Mammary epithelial cell (primary cell): ENCODE measurements at regions of chr11 and their contacts with region 1.

Region 1: GRCh38 chr11:120952461-120953434 is 71.2 kb upstream of the TBCEL start:
- DNase-seq: peak; percentile 56
- H3K4me3 ChIP-seq: no peak overlapping the region
- H3K27ac ChIP-seq: no peak overlapping the region
- H3K4me1 ChIP-seq: peaks cover 8% of the 10 kb centered on the region
- H3K27me3 ChIP-seq: peaks cover 3% of the 10 kb centered on the region
- CTCF ChIP-seq: peak; percentile 64 to 89

Region 2: GRCh38 chr11:120235024-120235861 is 717.5 kb before region 1 on chr11:
- CTCF ChIA-PET with region 1: no interaction called
- dilution Hi-C with region 1: no loop called
- in situ Hi-C with region 1: no loop called
- intact Hi-C with region 1: loop called (anchors 10 kb)
- DNase-seq: peak; percentile 62
- H3K4me3 ChIP-seq: no peak overlapping the region
- H3K27ac ChIP-seq: no peak overlapping the region
- H3K4me1 ChIP-seq: peaks cover 19% of the 10 kb centered on the region
- H3K27me3 ChIP-seq: peaks cover 5% of the 10 kb centered on the region
- CTCF ChIP-seq: peak; percentile 88 to 97

Region 3: DNA sequence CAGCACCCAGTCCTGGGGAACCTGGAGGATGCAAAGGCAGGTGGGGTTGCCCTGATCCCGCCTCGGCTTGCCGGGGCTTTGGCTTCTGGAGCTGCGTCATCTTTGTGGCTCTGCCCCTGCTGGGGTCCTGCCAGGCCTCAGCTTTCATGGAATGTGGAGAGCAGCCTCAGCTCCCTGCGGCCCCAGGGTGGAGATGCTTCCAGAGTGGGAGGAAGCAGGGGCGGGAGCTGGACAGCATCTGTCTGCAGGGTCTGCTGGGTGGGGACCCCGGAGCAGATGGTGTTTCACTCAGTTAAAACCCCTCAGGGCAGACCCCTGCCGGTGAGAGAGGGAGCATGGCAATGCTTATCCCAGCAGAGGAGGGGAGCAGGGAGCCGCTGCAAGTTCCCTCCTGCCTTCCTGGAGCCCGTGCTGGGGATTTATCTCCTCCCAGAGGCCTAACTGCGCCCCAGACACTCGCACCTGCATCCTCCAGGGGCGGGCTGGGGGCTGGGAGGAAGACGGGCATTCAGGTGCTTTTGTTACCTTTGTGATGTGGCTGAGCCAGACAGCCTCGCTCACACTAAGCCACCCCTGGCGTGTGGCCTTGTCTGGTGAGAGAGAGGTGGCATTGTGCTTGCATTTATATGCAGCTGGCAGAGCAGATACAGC is 425.5 kb before region 1 on chr11:
- CTCF ChIA-PET with region 1: no interaction called
- dilution Hi-C with region 1: no loop called
- in situ Hi-C with region 1: loop called (anchors 10 to 25 kb)
- intact Hi-C with region 1: no loop called
- DNase-seq: no peak
- H3K4me3 ChIP-seq: no peak overlapping the region
- H3K27ac ChIP-seq: no peak overlapping the region
- H3K4me1 ChIP-seq: no peaks in the 10 kb centered on the region
- H3K27me3 ChIP-seq: peaks cover 4% of the 10 kb centered on the region
- CTCF ChIP-seq: no peak

Region 4: GRCh38 chr11:120801801-120802689 is 150.7 kb before region 1 on chr11:
- CTCF ChIA-PET with region 1: interaction called, 4 read pairs
- dilution Hi-C with region 1: no loop called
- in situ Hi-C with region 1: no loop called
- intact Hi-C with region 1: loop called (anchors 10 kb)
- DNase-seq: peak; percentile 40
- H3K4me3 ChIP-seq: no peak overlapping the region
- H3K27ac ChIP-seq: no peak overlapping the region
- H3K4me1 ChIP-seq: no peaks in the 10 kb centered on the region
- H3K27me3 ChIP-seq: no peaks in the 10 kb centered on the region
- CTCF ChIP-seq: peak; percentile 86 to 93

Region 5: DNA sequence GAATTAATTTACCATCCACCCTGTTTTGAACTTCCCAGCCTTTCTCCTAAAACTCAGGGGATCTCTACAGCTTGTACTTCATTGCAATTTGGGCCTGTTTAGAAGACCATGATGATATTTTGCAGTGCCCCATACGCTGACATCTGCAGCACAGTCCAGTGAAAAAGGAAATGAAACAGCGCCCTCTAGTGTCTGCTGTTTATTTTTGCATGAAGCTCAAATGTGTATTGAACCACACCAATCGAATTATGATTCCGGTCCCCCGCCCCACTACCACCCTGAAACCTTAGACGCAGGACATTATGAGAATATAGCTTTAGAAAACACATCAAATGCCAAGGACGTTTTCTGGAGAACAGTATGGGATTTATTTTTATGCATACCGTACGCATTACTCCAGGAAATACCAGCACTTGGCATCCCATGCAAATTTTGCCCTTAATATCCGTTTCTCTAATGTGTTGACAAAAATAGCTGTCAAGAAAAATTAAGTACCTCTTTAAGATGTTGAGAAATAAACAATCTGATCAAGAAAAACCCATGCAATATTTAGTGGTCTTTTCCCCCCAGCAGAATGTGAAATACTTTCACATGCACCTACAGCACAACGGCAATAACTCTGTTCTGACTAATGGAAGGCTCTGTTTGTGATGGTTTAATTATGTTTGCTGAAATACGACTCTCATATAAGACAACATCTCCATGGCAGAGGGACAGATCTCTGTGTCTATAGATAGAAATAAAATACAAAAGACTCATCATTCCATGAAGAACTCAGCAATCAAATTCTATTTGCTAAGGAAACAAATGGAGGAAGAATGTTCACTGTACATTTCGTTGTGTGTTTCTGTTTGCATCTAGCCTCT is 242.2 kb after region 1 on chr11:
- CTCF ChIA-PET with region 1: interaction called, 6 read pairs
- dilution Hi-C with region 1: no loop called
- in situ Hi-C with region 1: no loop called
- intact Hi-C with region 1: loop called (anchors 10 kb)
- DNase-seq: peak; percentile 41
- H3K4me3 ChIP-seq: no peak overlapping the region
- H3K27ac ChIP-seq: no peak overlapping the region
- H3K4me1 ChIP-seq: no peaks in the 10 kb centered on the region
- H3K27me3 ChIP-seq: peaks cover 5% of the 10 kb centered on the region
- CTCF ChIP-seq: peak; percentile 77 to 81